Panc1 (cell line): ENCODE measurements at regions of chr15 and their contacts with region 1.

Region 1: GRCh38 chr15:60326824-60327654 is 70.7 kb downstream of the ANXA2 start:
- DNase-seq: peak; percentile 64
- ATAC-seq: peak; percentile 71
- H3K4me3 ChIP-seq: no peak overlapping the region
- H3K27ac ChIP-seq: no peak overlapping the region
- H3K4me1 ChIP-seq: no peaks in the 10 kb centered on the region
- H3K27me3 ChIP-seq: no peaks in the 10 kb centered on the region
- CTCF ChIP-seq: peak; percentile 88

Region 2: GRCh38 chr15:59688841-59689625 is 638.0 kb before region 1 on chr15 and contains the start of gene BNIP2:
- CTCF ChIA-PET with region 1: interaction called, 19 read pairs
- POLR2A ChIA-PET with region 1: no interaction called
- in situ Hi-C with region 1: no loop called
- intact Hi-C with region 1: loop called (anchors 5 kb)
- DNase-seq: peak; percentile 91
- ATAC-seq: peak; percentile 97
- H3K4me3 ChIP-seq: peak within 1 kb of the TSS; percentile 80 to 90
- H3K27ac ChIP-seq: peak within 1 kb of the TSS; percentile 92
- H3K4me1 ChIP-seq: peaks cover 24% of the 10 kb centered on the region
- H3K27me3 ChIP-seq: no peaks in the 10 kb centered on the region
- CTCF ChIP-seq: no peak
- total RNA-seq, gene BNIP2: 70.7 TPM

Region 3: GRCh38 chr15:59917504-59918157 is 409.4 kb before region 1 on chr15:
- CTCF ChIA-PET with region 1: interaction called, 4 read pairs
- POLR2A ChIA-PET with region 1: no interaction called
- in situ Hi-C with region 1: no loop called
- intact Hi-C with region 1: loop called (anchors 2 kb)
- DNase-seq: peak; percentile 25
- ATAC-seq: peak; percentile 99
- H3K4me3 ChIP-seq: no peak overlapping the region
- H3K27ac ChIP-seq: no peak overlapping the region
- H3K4me1 ChIP-seq: no peaks in the 10 kb centered on the region
- H3K27me3 ChIP-seq: no peaks in the 10 kb centered on the region
- CTCF ChIP-seq: peak; percentile 78

Region 4: DNA sequence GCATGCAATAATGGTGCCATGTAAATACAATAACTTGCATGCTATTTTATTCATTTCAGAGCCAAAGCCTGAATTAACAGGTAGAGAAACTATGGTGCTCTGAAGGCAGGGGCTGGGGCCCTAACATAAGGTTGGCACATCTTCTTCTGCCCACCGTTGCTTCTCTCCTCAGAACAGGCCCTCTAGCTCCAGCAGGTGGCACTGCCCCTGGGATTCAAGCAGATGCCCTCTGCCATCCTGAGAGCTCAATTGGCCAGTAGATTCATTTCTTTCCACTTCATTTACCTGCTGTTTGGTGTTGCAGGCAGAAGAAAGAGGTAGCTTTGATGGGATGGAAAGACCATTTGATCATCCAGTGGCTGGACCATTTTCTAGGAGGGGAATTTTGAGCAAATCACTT is 192.4 kb before region 1 on chr15:
- CTCF ChIA-PET with region 1: no interaction called
- POLR2A ChIA-PET with region 1: no interaction called
- in situ Hi-C with region 1: no loop called
- intact Hi-C with region 1: loop called (anchors 10 kb)
- DNase-seq: no peak
- ATAC-seq: peak; percentile 68; the same call in 1 of the 2 replicates
- H3K4me3 ChIP-seq: no peak overlapping the region
- H3K27ac ChIP-seq: no peak overlapping the region
- H3K4me1 ChIP-seq: no peaks in the 10 kb centered on the region
- H3K27me3 ChIP-seq: no peaks in the 10 kb centered on the region
- CTCF ChIP-seq: peak; percentile 61

Region 5: DNA sequence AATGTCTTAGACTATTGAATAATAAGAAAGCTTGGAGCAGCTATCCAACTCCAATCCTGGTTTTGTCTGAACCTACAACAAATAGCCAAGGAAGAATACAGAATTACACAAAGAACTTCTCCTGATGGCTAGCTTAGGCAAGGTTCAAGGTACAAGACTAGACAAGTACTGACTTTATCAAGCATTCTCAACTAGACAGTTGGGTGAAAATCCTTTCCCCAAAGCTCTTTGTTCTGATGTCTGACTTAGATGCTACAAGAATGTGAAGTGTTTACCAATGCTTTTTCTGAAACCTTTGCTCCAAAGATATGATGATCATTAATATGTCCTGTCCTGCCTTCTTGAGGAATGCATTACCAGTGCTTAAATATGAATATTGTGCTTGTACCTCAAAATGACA is 43.1 kb before region 1 on chr15:
- CTCF ChIA-PET with region 1: no interaction called
- POLR2A ChIA-PET with region 1: no interaction called
- in situ Hi-C with region 1: no loop called
- intact Hi-C with region 1: no loop called
- DNase-seq: no peak
- ATAC-seq: no peak
- H3K4me3 ChIP-seq: no peak overlapping the region
- H3K27ac ChIP-seq: no peak overlapping the region
- H3K4me1 ChIP-seq: no peaks in the 10 kb centered on the region
- H3K27me3 ChIP-seq: peaks cover 8% of the 10 kb centered on the region
- CTCF ChIP-seq: no peak

Region 6: DNA sequence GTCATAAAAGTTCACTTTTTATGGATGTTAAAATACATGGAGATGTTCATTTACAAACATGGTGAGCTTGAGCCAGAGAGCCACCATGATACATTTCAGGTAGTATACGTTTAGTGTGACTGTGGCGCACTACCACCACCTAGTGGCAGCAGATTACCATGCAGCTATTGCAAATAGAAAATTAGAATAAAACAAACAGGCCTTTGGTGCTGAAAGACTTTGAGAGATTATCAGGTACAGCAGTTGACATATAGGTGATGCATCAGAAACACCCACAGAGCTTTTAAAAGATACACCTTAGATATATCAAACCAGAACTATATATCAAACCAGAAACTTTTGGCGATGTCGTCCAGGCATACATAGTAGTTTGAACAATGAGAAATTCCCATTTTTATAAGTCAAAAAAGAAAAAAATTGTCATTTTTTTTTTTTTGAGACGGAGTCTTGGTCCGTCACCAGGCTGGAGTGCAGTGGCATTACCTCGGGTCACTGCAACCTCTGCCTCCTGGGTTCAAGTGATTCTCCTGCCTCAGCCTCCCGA is 193.9 kb after region 1 on chr15:
- CTCF ChIA-PET with region 1: interaction called, 5 read pairs
- POLR2A ChIA-PET with region 1: no interaction called
- in situ Hi-C with region 1: no loop called
- intact Hi-C with region 1: loop called (anchors 1 kb)
- DNase-seq: peak; percentile 72
- ATAC-seq: peak; percentile 90
- H3K4me3 ChIP-seq: no peak overlapping the region
- H3K27ac ChIP-seq: no peak overlapping the region
- H3K4me1 ChIP-seq: 0 out of 2 replicates have a peak, but pooled peaks cover 11% of the 10 kb centered on the region
- H3K27me3 ChIP-seq: no peaks in the 10 kb centered on the region
- CTCF ChIP-seq: peak; percentile 93